B cell (primary cell): ENCODE measurements at regions of chr9 and their contacts with region 1.

Region 1: DNA sequence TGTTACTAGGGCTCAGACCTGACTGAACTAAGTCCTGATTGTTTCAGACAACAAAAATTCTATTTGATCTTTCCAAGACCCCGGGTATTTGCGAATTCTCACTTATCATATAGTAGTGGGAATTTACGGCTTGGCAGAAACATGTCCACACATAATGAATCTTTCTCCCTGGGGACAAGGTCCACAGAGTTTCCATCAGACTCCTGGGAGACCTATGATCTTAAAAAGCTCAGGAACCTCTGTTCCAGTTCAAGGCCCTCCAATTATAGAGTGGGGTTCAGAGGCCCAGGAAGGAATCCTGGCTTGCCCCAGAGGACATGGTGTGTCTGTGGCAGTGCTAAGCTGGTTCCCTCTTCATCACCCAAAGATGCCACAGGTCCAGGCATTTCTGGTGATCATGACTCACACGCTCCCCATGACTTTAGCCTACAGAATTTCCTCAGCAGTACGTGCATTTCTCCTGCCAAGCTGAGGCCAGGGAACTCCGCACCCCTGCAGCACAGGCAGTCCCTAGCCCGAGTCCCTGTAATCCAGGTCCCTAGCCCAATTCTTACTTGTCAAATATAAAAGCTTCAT is 12.6 kb downstream of the RAPGEF1 start:
- DNase-seq: no peak
- ATAC-seq: no peak
- H3K4me3 ChIP-seq: peak overlapping the region in 1 of 5 experiments; percentile 46
- H3K4me3 Mint-ChIP-seq: peak overlapping the region; percentile 89
- H3K27ac ChIP-seq: peak overlapping the region; percentile 99 to 100
- H3K27ac Mint-ChIP-seq: peak overlapping the region; percentile 91
- H3K4me1 ChIP-seq: peaks cover 88 to 97% of the 10 kb centered on the region in 2 donors
- H3K4me1 Mint-ChIP-seq: peaks cover 87% of the 10 kb centered on the region
- H3K27me3 ChIP-seq: no peaks in the 10 kb centered on the region
- H3K27me3 Mint-ChIP-seq: no peaks in the 10 kb centered on the region
- CTCF ChIP-seq: no peak

Region 2: GRCh38 chr9:131668439-131669268 is 58.6 kb before region 1 on chr9:
- CTCF ChIA-PET with region 1: interaction called, 146 read pairs
- POLR2A ChIA-PET with region 1: no interaction called
- intact Hi-C with region 1: no loop called
- DNase-seq: peak; percentile 81
- ATAC-seq: peak; percentile 57
- H3K4me3 ChIP-seq: peak overlapping the region in 3 of 5 experiments; percentile 0 to 25 (median 11)
- H3K4me3 Mint-ChIP-seq: peak overlapping the region; percentile 81
- H3K27ac ChIP-seq: peak overlapping the region; percentile 71 to 96
- H3K27ac Mint-ChIP-seq: peak overlapping the region; percentile 94
- H3K4me1 ChIP-seq: peaks cover 89 to 92% of the 10 kb centered on the region in 2 donors
- H3K4me1 Mint-ChIP-seq: peaks cover 94% of the 10 kb centered on the region
- H3K27me3 ChIP-seq: no peaks in the 10 kb centered on the region
- H3K27me3 Mint-ChIP-seq: no peaks in the 10 kb centered on the region
- CTCF ChIP-seq: no peak

Region 3: GRCh38 chr9:131709771-131710454 is 17.4 kb before region 1 on chr9:
- CTCF ChIA-PET with region 1: interaction called, 7 read pairs
- POLR2A ChIA-PET with region 1: interaction called, 5 read pairs
- intact Hi-C with region 1: loop called (anchors 2 kb)
- DNase-seq: peak; percentile 65
- ATAC-seq: peak; percentile 53
- H3K4me3 ChIP-seq: no peak overlapping the region
- H3K4me3 Mint-ChIP-seq: peak overlapping the region; percentile 71
- H3K27ac ChIP-seq: peak overlapping the region; percentile 46 to 59
- H3K27ac Mint-ChIP-seq: peak overlapping the region; percentile 77
- H3K4me1 ChIP-seq: peaks cover 70 to 77% of the 10 kb centered on the region in 2 donors
- H3K4me1 Mint-ChIP-seq: peaks cover 83% of the 10 kb centered on the region
- H3K27me3 ChIP-seq: no peaks in the 10 kb centered on the region
- H3K27me3 Mint-ChIP-seq: no peaks in the 10 kb centered on the region
- CTCF ChIP-seq: no peak